B cell (primary cell): ENCODE measurements at regions of chr3 and their contacts with region 1.

Region 1: GRCh38 chr3:126083913-126084767 is at the start of gene SLC41A3:
- DNase-seq: peak; percentile 85
- ATAC-seq: peak; percentile 92
- H3K4me3 ChIP-seq: peak within 1 kb of the TSS in 4 of 5 experiments; percentile 51 to 79 (median 67)
- H3K4me3 Mint-ChIP-seq: peak within 1 kb of the TSS; percentile 87
- H3K27ac ChIP-seq: peak within 1 kb of the TSS; percentile 56 to 92
- H3K27ac Mint-ChIP-seq: peak within 1 kb of the TSS; percentile 87
- H3K4me1 ChIP-seq: peaks cover 13 to 15% of the 10 kb centered on the region in 2 donors
- H3K4me1 Mint-ChIP-seq: peaks cover 14% of the 10 kb centered on the region
- H3K27me3 ChIP-seq: no peaks in the 10 kb centered on the region
- H3K27me3 Mint-ChIP-seq: no peaks in the 10 kb centered on the region
- CTCF ChIP-seq: peak; percentile 68
- total RNA-seq, gene SLC41A3: 35.9 and 39.3 TPM in 2 replicates

Region 2: GRCh38 chr3:125916376-125916978 is 167.7 kb before region 1 on chr3:
- CTCF ChIA-PET with region 1: no interaction called
- POLR2A ChIA-PET with region 1: no interaction called
- intact Hi-C with region 1: loop called (anchors 1 kb)
- DNase-seq: peak; percentile 94
- ATAC-seq: peak; percentile 90
- H3K4me3 ChIP-seq: peak overlapping the region; percentile 21 to 77 (median 74)
- H3K4me3 Mint-ChIP-seq: peak overlapping the region; percentile 93
- H3K27ac ChIP-seq: peak overlapping the region; percentile 78 to 85
- H3K27ac Mint-ChIP-seq: peak overlapping the region; percentile 96
- H3K4me1 ChIP-seq: peaks cover 0 to 15% of the 10 kb centered on the region in 2 donors
- H3K4me1 Mint-ChIP-seq: peaks cover 11% of the 10 kb centered on the region
- H3K27me3 ChIP-seq: no peaks in the 10 kb centered on the region
- H3K27me3 Mint-ChIP-seq: no peaks in the 10 kb centered on the region
- CTCF ChIP-seq: no peak

Region 3: GRCh38 chr3:125990253-125990970 is 93.7 kb before region 1 on chr3:
- CTCF ChIA-PET with region 1: no interaction called
- POLR2A ChIA-PET with region 1: no interaction called
- intact Hi-C with region 1: loop called (anchors 1 kb)
- DNase-seq: peak; percentile 83
- ATAC-seq: peak; percentile 80
- H3K4me3 ChIP-seq: peak overlapping the region; percentile 66 to 78 (median 73)
- H3K4me3 Mint-ChIP-seq: peak overlapping the region; percentile 91
- H3K27ac ChIP-seq: peak overlapping the region; percentile 68 to 80
- H3K27ac Mint-ChIP-seq: peak overlapping the region; percentile 94
- H3K4me1 ChIP-seq: peaks cover 3 to 13% of the 10 kb centered on the region in 2 donors
- H3K4me1 Mint-ChIP-seq: peaks cover 5% of the 10 kb centered on the region
- H3K27me3 ChIP-seq: no peaks in the 10 kb centered on the region
- H3K27me3 Mint-ChIP-seq: peaks cover 3% of the 10 kb centered on the region
- CTCF ChIP-seq: no peak

Region 4: DNA sequence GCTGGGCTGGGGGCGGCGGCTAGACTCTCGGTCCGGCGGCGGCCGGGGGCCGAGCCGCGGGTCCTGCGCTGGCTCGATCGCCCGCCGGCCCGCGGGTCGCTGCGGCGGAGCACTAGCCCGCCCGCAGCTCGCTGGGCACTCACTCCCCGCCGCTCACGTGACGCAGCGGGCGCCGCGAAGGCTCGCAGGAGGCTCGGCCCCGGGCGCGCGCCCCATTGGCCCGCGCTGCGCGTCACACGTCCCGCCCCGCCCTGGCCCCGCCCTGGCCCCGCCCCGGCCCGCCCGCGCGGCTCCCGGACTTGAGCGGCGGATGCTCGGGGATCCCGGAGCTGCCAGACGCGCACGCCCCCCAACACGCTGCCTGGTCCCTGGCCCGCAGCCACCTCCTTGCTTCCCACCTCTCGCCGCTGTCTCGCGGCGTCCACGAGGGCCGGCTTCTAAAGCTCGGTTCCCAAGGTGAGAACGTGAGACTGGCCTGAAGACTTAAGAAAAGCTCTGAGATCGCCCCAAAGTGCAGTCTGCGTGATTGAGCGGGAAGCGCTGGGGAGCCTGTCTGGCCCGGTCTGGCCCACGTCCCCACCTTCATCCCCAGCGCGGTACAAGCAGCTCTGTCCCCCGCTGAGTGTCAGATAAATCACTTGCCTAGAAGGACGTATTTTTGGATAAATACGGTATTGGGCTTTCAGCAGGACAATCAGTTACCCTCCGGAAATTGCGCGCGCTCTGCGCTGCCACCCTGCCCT is 273.3 kb after region 1 on chr3 and contains the start of gene KLF15:
- CTCF ChIA-PET with region 1: no interaction called
- POLR2A ChIA-PET with region 1: no interaction called
- intact Hi-C with region 1: loop called (anchors 2 kb)
- DNase-seq: peak; percentile 85
- ATAC-seq: peak; percentile 93
- H3K4me3 ChIP-seq: peak within 1 kb of the TSS; percentile 12 to 84 (median 59)
- H3K4me3 Mint-ChIP-seq: peak within 1 kb of the TSS; percentile 95
- H3K27ac ChIP-seq: no peak within 1 kb of the TSS
- H3K27ac Mint-ChIP-seq: peak within 1 kb of the TSS; percentile 81
- H3K4me1 ChIP-seq: peaks cover 20 to 21% of the 10 kb centered on the region in 2 donors
- H3K4me1 Mint-ChIP-seq: peaks cover 16% of the 10 kb centered on the region
- H3K27me3 ChIP-seq: peaks cover 0 to 54% (median 22%) of the 10 kb centered on the region in 4 experiments
- H3K27me3 Mint-ChIP-seq: peaks cover 50% of the 10 kb centered on the region
- CTCF ChIP-seq: no peak
- total RNA-seq, gene KLF15: 0.83 and 2.2 TPM in 2 replicates

Region 5: DNA sequence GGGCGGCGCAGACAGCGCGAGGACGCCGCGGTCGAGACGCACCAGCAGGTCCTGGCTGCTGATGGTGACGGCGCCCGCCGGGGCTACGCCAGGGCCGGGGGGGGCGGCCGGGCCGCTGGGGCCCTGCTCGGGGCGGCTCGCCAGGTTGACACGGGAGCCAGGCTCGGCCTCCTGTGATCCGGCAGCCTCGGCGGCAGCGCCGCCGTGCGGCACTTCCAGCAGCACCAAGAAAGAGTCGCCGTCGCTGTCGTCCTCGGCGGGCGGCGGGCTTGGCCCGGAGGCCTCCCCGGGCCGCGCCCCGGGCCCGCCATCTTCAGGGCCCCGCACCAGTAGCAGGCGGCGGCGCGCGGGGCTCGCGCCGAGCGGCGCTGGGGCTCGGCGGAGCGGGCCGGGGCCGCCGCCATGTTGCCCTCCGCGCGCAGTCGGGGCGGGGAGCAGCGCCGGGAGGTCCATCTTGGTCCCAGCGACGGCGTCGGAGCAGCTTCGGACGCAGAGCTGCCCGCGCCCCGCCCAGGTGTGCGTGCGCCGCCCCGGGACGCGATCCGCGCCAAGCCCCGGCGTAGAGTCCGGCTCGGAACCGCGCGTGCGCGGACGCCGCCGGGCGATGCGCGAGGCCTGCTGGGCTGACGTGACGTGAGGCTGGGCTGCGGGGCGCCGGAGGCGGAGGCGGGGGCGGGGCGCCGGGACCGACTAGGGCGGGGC is 391.4 kb after region 1 on chr3 and contains the start of gene ZXDC:
- CTCF ChIA-PET with region 1: no interaction called
- POLR2A ChIA-PET with region 1: no interaction called
- intact Hi-C with region 1: loop called (anchors 5 kb)
- DNase-seq: peak; percentile 96
- ATAC-seq: peak; percentile 84
- H3K4me3 ChIP-seq: peak within 1 kb of the TSS; percentile 51 to 84 (median 65)
- H3K4me3 Mint-ChIP-seq: peak within 1 kb of the TSS; percentile 89
- H3K27ac ChIP-seq: peak within 1 kb of the TSS; percentile 61 to 73
- H3K27ac Mint-ChIP-seq: peak within 1 kb of the TSS; percentile 91
- H3K4me1 ChIP-seq: peaks cover 35 to 39% of the 10 kb centered on the region in 2 donors
- H3K4me1 Mint-ChIP-seq: peaks cover 40% of the 10 kb centered on the region
- H3K27me3 ChIP-seq: no peaks in the 10 kb centered on the region
- H3K27me3 Mint-ChIP-seq: no peaks in the 10 kb centered on the region
- CTCF ChIP-seq: peak; percentile 29
- total RNA-seq, gene ZXDC: 70.9 and 75.9 TPM in 2 replicates

Region 6: GRCh38 chr3:126703512-126704462 is 619.6 kb after region 1 on chr3 and contains the start of gene CHCHD6:
- CTCF ChIA-PET with region 1: no interaction called
- POLR2A ChIA-PET with region 1: no interaction called
- intact Hi-C with region 1: loop called (anchors 10 kb)
- DNase-seq: peak; percentile 97
- ATAC-seq: peak; percentile 96
- H3K4me3 ChIP-seq: peak within 1 kb of the TSS in 4 of 5 experiments; percentile 61 to 79 (median 75)
- H3K4me3 Mint-ChIP-seq: peak within 1 kb of the TSS; percentile 92
- H3K27ac ChIP-seq: peak within 1 kb of the TSS in 1 of 2 donors; percentile 11
- H3K27ac Mint-ChIP-seq: peak within 1 kb of the TSS; percentile 78
- H3K4me1 ChIP-seq: peaks cover 11 to 15% of the 10 kb centered on the region in 2 donors
- H3K4me1 Mint-ChIP-seq: peaks cover 17% of the 10 kb centered on the region
- H3K27me3 ChIP-seq: peaks cover 0 to 9% (median 4%) of the 10 kb centered on the region in 4 experiments
- H3K27me3 Mint-ChIP-seq: peaks cover 36% of the 10 kb centered on the region
- CTCF ChIP-seq: no peak
- total RNA-seq, gene CHCHD6: 13.5 TPM in 2 replicates

Region 7: GRCh38 chr3:127750226-127751031 is 1666.3 kb after region 1 on chr3:
- CTCF ChIA-PET with region 1: no interaction called
- POLR2A ChIA-PET with region 1: no interaction called
- intact Hi-C with region 1: loop called (anchors 10 kb)
- DNase-seq: peak; percentile 32
- ATAC-seq: no peak
- H3K4me3 ChIP-seq: no peak overlapping the region
- H3K4me3 Mint-ChIP-seq: peak overlapping the region; percentile 46
- H3K27ac ChIP-seq: no peak overlapping the region
- H3K27ac Mint-ChIP-seq: peak overlapping the region; percentile 43
- H3K4me1 ChIP-seq: peaks cover 27 to 36% of the 10 kb centered on the region in 2 donors
- H3K4me1 Mint-ChIP-seq: peaks cover 53% of the 10 kb centered on the region
- H3K27me3 ChIP-seq: no peaks in the 10 kb centered on the region
- H3K27me3 Mint-ChIP-seq: no peaks in the 10 kb centered on the region
- CTCF ChIP-seq: no peak